ENCODE measurements at regions of chr2 and their contacts with region 1.

Region 1: DNA sequence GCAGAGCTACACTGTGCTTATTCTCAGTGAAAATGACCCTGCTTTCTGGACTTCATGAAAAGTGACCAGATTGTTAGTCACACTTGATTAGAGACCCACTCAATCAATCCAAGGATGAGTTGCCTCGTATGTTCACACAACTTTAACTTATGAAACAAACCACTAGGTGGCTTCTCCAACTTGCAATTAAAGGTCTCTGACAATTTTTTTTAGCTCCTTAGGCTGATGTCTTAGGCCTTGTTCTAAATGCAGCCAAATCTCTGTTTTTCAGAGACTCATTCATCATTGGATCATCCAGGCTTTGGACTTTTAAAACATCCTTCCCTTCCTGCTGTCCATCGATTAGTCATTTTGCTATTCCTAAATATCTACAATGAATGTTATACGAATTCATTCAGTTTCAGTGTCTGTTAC is 63.4 kb downstream of the MREG start:
- DNase-seq: peak in 6 of 9 donors; percentile 4 to 47 (median 26)
- ATAC-seq: peak; percentile 42
- H3K4me3 ChIP-seq: no peak overlapping the region
- H3K4me3 Mint-ChIP-seq: no peak overlapping the region
- H3K27ac ChIP-seq: no peak overlapping the region
- H3K27ac Mint-ChIP-seq: no peak overlapping the region
- H3K4me1 ChIP-seq: no peaks in the 10 kb centered on the region
- H3K4me1 Mint-ChIP-seq: peaks cover 0 to 5% (median 0%) of the 10 kb centered on the region in 7 donors
- H3K27me3 ChIP-seq: no peaks in the 10 kb centered on the region
- H3K27me3 Mint-ChIP-seq: no peaks in the 10 kb centered on the region

Region 2: GRCh38 chr2:216023055-216023648 is 73.2 kb after region 1 on chr2:
- CTCF ChIA-PET with region 1: interaction called, 6 read pairs
- POLR2A ChIA-PET with region 1: no interaction called
- intact Hi-C with region 1: loop called (anchors 1 kb)
- DNase-seq: peak in 6 of 9 donors; percentile 8 to 35 (median 30)
- ATAC-seq: peak; percentile 74
- H3K4me3 ChIP-seq: no peak overlapping the region
- H3K4me3 Mint-ChIP-seq: no peak overlapping the region
- H3K27ac ChIP-seq: no peak overlapping the region
- H3K27ac Mint-ChIP-seq: no peak overlapping the region
- H3K4me1 ChIP-seq: no peaks in the 10 kb centered on the region
- H3K4me1 Mint-ChIP-seq: peaks cover 0 to 15% (median 5%) of the 10 kb centered on the region in 7 donors
- H3K27me3 ChIP-seq: no peaks in the 10 kb centered on the region
- H3K27me3 Mint-ChIP-seq: no peaks in the 10 kb centered on the region